ENCODE measurements at regions of chr1 and their contacts with region 1.

Region 1: GRCh38 chr1:151098126-151098525 is 27.6 kb downstream of the GABPB2 start:
- DNase-seq: no peak
- H3K4me3 ChIP-seq: no peak overlapping the region
- H3K27ac ChIP-seq: no peak overlapping the region
- H3K4me1 ChIP-seq: no peaks in the 10 kb centered on the region
- H3K27me3 ChIP-seq: no peaks in the 10 kb centered on the region
- CTCF ChIP-seq: no peak
- EP300 ChIP-seq: no peak
- POLR2A ChIP-seq: no peak
- RAD21 ChIP-seq: no peak

Region 2: GRCh38 chr1:151024540-151025146 is 73.5 kb before region 1 on chr1:
- CTCF ChIA-PET with region 1: interaction called, 21 read pairs
- POLR2A ChIA-PET with region 1: no interaction called
- DNase-seq: peak; percentile 73 to 94
- H3K4me3 ChIP-seq: no peak overlapping the region
- H3K27ac ChIP-seq: no peak overlapping the region
- H3K4me1 ChIP-seq: no peaks in the 10 kb centered on the region
- H3K27me3 ChIP-seq: no peaks in the 10 kb centered on the region
- CTCF ChIP-seq: peak; percentile 87 to 95 (median 94)
- EP300 ChIP-seq: no peak
- POLR2A ChIP-seq: no peak
- RAD21 ChIP-seq: peak; percentile 87 to 93

Region 3: DNA sequence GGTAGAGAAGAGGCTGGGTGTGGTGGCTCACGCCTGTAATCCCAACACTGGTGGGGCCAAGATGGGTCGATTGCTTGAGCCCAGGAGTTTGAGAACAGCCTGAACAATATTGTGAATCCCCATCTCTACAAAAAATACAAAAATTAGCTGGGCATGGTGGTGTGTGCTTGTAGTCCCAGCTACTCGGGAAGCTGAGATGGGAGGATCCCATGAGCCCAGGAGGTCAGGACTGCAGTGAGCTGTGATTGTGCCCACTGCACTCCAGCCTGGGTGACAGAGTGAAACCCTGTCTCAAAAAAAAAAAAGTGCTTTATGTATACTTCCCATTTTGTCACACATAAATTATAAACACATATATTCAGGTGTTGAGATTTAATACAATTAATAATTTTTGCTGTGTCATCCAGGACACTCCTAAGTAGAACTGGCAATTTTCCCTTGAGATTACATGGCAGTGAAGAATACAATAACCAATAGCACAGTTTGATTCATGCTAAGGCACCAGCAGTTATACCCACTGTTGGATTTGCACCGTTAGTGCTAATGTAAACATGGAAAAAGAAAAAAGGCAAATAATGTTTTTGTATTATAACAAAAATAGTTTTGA is 12.1 kb before region 1 on chr1:
- CTCF ChIA-PET with region 1: interaction called, 58 read pairs
- POLR2A ChIA-PET with region 1: interaction called, 3 read pairs
- DNase-seq: no peak
- H3K4me3 ChIP-seq: no peak overlapping the region
- H3K27ac ChIP-seq: no peak overlapping the region
- H3K4me1 ChIP-seq: no peaks in the 10 kb centered on the region; a peak in 2 of 7 replicates
- H3K27me3 ChIP-seq: no peaks in the 10 kb centered on the region
- CTCF ChIP-seq: no peak
- EP300 ChIP-seq: no peak
- POLR2A ChIP-seq: no peak
- RAD21 ChIP-seq: no peak

Region 4: GRCh38 chr1:151124763-151125403 is 26.8 kb after region 1 on chr1:
- CTCF ChIA-PET with region 1: interaction called, 21 read pairs
- POLR2A ChIA-PET with region 1: interaction called, 3 read pairs
- DNase-seq: no peak
- H3K4me3 ChIP-seq: no peak overlapping the region
- H3K27ac ChIP-seq: no peak overlapping the region
- H3K4me1 ChIP-seq: peaks cover 0 to 6% (median under 1%) of the 10 kb centered on the region in 4 experiments; a peak in 3 of 7 replicates
- H3K27me3 ChIP-seq: no peaks in the 10 kb centered on the region
- CTCF ChIP-seq: no peak
- EP300 ChIP-seq: no peak
- POLR2A ChIP-seq: no peak
- RAD21 ChIP-seq: no peak

Region 5: GRCh38 chr1:151156515-151156819 is 58.3 kb after region 1 on chr1 and contains the start of gene TNFAIP8L2:
- CTCF ChIA-PET with region 1: interaction called, 285 read pairs
- POLR2A ChIA-PET with region 1: interaction called, 4 read pairs
- DNase-seq: no peak
- H3K4me3 ChIP-seq: no peak within 1 kb of the TSS
- H3K27ac ChIP-seq: no peak within 1 kb of the TSS
- H3K4me1 ChIP-seq: no peaks in the 10 kb centered on the region
- H3K27me3 ChIP-seq: no peaks in the 10 kb centered on the region
- CTCF ChIP-seq: no peak
- EP300 ChIP-seq: no peak
- POLR2A ChIP-seq: no peak
- RAD21 ChIP-seq: no peak
- total RNA-seq, gene TNFAIP8L2: not detected in 2 replicates

Region 6: GRCh38 chr1:151175910-151176309 is 77.8 kb after region 1 on chr1 and contains the start of gene TMOD4:
- CTCF ChIA-PET with region 1: interaction called, 16 read pairs
- POLR2A ChIA-PET with region 1: no interaction called
- DNase-seq: no peak
- H3K4me3 ChIP-seq: no peak within 1 kb of the TSS
- H3K27ac ChIP-seq: no peak within 1 kb of the TSS
- H3K4me1 ChIP-seq: no peaks in the 10 kb centered on the region
- H3K27me3 ChIP-seq: no peaks in the 10 kb centered on the region
- CTCF ChIP-seq: peak; percentile 37 to 67 (median 47)
- EP300 ChIP-seq: no peak
- POLR2A ChIP-seq: no peak
- RAD21 ChIP-seq: peak; percentile 15 to 31; a peak in 1 of 4 replicates
- total RNA-seq, gene TMOD4: not detected in 2 replicates

Measured in H1 (cell line).